ENCODE measurements at regions of chr3 and their contacts with region 1.

Region 1: DNA sequence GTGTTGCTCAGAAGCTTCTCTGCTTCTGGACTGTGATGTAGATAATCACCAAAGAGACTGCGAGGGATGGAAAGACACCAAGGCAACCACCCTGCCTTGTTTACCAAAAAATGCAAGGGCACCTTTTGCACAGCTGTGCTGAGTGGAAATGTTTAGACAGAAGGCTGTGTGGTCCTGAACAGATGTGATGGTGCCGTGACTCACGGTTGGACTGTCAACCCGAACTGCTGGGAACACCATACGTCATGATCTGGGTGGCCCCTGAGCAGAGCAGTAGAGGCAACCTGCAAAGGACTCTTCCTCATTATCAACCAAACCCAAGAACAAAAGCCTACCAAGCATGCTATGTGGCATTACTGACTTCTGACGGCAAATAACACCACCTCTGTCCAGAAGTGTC is 61.3 kb upstream of the LPP start:
- DNase-seq: peak; percentile 90
- H3K4me3 ChIP-seq: peak overlapping the region; percentile 6
- H3K27ac ChIP-seq: peak overlapping the region; percentile 76
- H3K4me1 ChIP-seq: peaks cover 91% of the 10 kb centered on the region
- CTCF ChIP-seq: no peak

Region 2: GRCh38 chr3:187935623-187936156 is 157.0 kb before region 1 on chr3:
- CTCF ChIA-PET with region 1: no interaction called
- POLR2A ChIA-PET with region 1: interaction called, 10 read pairs
- intact Hi-C with region 1: no loop called
- DNase-seq: peak; percentile 91
- H3K4me3 ChIP-seq: peak overlapping the region; percentile 25
- H3K27ac ChIP-seq: peak overlapping the region; percentile 99
- H3K4me1 ChIP-seq: peaks cover 100% of the 10 kb centered on the region
- CTCF ChIP-seq: no peak

Region 3: GRCh38 chr3:188000361-188000861 is 92.2 kb before region 1 on chr3:
- CTCF ChIA-PET with region 1: interaction called, 3 read pairs
- POLR2A ChIA-PET with region 1: interaction called, 5 read pairs
- intact Hi-C with region 1: loop called (anchors 2 kb)
- DNase-seq: peak; percentile 82
- H3K4me3 ChIP-seq: peak overlapping the region; percentile 60
- H3K27ac ChIP-seq: peak overlapping the region; percentile 96
- H3K4me1 ChIP-seq: peaks cover 83% of the 10 kb centered on the region
- CTCF ChIP-seq: no peak

Region 4: GRCh38 chr3:188154014-188154808 is 61.6 kb after region 1 on chr3 and contains the start of gene LPP:
- CTCF ChIA-PET with region 1: interaction called, 5 read pairs
- POLR2A ChIA-PET with region 1: interaction called, 4 read pairs
- intact Hi-C with region 1: loop called (anchors 2 kb)
- DNase-seq: peak; percentile 79
- H3K4me3 ChIP-seq: peak within 1 kb of the TSS; percentile 82
- H3K27ac ChIP-seq: peak within 1 kb of the TSS; percentile 41
- H3K4me1 ChIP-seq: peaks cover 35% of the 10 kb centered on the region
- CTCF ChIP-seq: no peak; the same call in 1 of the 2 replicates
- total RNA-seq, gene LPP: 7.4 and 10.9 TPM in 2 replicates

Region 5: GRCh38 chr3:188214442-188214841 is 121.8 kb after region 1 on chr3:
- CTCF ChIA-PET with region 1: no interaction called
- POLR2A ChIA-PET with region 1: interaction called, 6 read pairs
- intact Hi-C with region 1: loop called (anchors 2 kb)
- DNase-seq: peak; percentile 82
- H3K4me3 ChIP-seq: peak overlapping the region; percentile 47
- H3K27ac ChIP-seq: peak overlapping the region; percentile 98
- H3K4me1 ChIP-seq: peaks cover 80% of the 10 kb centered on the region
- CTCF ChIP-seq: no peak

Region 6: DNA sequence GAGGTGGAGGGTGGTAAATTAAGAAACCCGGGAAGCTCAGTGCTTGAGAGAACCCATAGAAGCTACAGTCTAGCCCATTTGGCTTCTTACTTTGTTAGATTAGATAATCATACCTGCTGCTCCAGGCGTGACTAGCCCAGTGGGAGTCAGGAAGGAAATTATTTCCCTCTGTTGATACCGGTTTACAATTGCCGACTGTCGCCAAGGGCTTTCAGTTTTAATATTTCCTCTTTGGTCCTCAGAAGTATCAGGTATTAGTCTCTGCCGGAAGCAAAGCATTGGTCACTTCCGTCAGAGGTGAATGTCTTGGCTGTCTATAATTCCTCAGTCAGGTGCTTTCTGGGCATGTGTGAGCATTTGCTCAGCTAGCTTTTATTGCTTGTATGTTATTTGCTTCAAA is 136.5 kb after region 1 on chr3:
- CTCF ChIA-PET with region 1: no interaction called
- POLR2A ChIA-PET with region 1: no interaction called
- intact Hi-C with region 1: no loop called
- DNase-seq: no peak
- H3K4me3 ChIP-seq: no peak overlapping the region
- H3K27ac ChIP-seq: no peak overlapping the region
- H3K4me1 ChIP-seq: peaks cover 33% of the 10 kb centered on the region
- CTCF ChIP-seq: no peak

Region 7: DNA sequence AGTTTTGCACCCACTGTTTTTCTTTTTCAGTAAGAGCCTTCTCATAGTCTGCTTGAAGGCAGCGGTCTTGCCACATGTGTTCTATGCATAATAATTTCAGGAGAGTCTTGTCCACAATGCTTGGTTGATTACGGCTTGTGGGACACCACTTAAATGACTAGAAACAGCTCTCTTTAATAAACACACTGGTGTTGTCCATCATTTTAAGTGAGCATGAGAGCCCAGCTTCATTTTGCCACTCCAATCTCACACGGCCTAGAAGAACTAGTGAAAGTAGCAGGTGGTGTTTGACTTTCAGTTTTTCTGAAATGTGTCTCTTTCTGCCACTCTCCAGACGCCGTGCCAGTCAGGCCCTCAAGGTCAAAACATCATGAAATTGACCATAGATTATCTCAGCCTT is 353.4 kb after region 1 on chr3:
- CTCF ChIA-PET with region 1: no interaction called
- POLR2A ChIA-PET with region 1: interaction called, 7 read pairs
- intact Hi-C with region 1: loop called (anchors 5 kb)
- DNase-seq: peak; percentile 90
- H3K4me3 ChIP-seq: peak overlapping the region; percentile 46
- H3K27ac ChIP-seq: peak overlapping the region; percentile 88
- H3K4me1 ChIP-seq: peaks cover 48% of the 10 kb centered on the region
- CTCF ChIP-seq: no peak

Region 8: DNA sequence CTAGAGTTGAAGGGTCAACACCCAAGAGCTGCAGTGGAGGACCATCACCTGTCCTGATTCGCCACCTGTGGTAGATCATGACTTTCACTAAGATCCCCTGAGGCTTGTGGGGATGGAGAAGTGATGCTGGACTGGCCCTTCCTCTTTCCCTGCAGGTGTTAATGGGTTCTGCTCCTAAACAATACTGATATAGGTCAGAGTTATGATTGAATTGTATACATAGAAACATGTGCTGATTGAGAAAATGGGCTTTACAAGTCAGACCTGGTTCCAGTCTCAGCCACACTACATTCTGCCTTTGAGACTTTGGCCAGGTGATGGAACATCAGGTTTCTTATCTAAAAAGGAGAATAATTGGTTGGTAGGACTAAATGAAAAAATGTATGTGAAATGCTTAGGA is 660.2 kb after region 1 on chr3:
- CTCF ChIA-PET with region 1: no interaction called
- POLR2A ChIA-PET with region 1: no interaction called
- intact Hi-C with region 1: loop called (anchors 5 kb)
- DNase-seq: peak; percentile 76
- H3K4me3 ChIP-seq: peak overlapping the region; percentile 54
- H3K27ac ChIP-seq: peak overlapping the region; percentile 89
- H3K4me1 ChIP-seq: peaks cover 68% of the 10 kb centered on the region
- CTCF ChIP-seq: no peak

Measured in OCI-LY7 (cell line).